GM12878 (cell line): ENCODE measurements at regions of chr2 and their contacts with region 1.

Region 1: GRCh38 chr2:37570773-37571586 is 100.5 kb downstream of the CDC42EP3 start:
- DNase-seq: peak; percentile 98
- ATAC-seq: peak; percentile 87
- H3K4me3 ChIP-seq: peak overlapping the region; percentile 0; the same call in 1 of the 2 replicates
- H3K27ac ChIP-seq: peak overlapping the region; percentile 90
- H3K4me1 ChIP-seq: peaks cover 41% of the 10 kb centered on the region
- H3K27me3 ChIP-seq: no peaks in the 10 kb centered on the region
- CTCF ChIP-seq: no peak
- EP300 ChIP-seq: peak; percentile 86 to 87
- POLR2A ChIP-seq: peak; percentile 59
- RAD21 ChIP-seq: peak; percentile 45

Region 2: DNA sequence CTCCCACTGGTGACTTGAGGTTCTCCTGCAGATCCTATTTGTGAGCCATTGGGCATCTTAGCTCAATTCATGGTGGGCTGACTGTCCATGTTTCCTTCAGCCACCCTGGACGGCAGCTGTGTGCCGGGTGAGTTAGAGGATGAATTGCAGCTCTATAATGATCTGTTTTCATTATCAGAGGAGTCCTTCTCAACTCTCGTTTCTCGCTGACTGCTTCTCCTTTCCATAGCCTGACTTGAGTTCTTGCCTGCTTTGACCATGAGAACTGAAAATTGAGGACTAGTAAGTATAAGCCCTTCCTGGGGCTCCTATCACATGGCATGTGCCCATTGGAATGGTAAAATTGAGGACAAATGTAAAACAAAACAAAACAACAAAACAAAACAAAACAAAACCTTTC is 21.4 kb before region 1 on chr2:
- CTCF ChIA-PET with region 1: interaction called, 14 read pairs
- POLR2A ChIA-PET with region 1: interaction called, 74 read pairs
- RAD21 ChIA-PET with region 1: interaction called, 41 read pairs
- SMC1A ChIA-PET with region 1: interaction called, 246 read pairs
- in situ Hi-C with region 1: no loop called
- intact Hi-C with region 1: loop called (anchors 1 kb)
- DNase-seq: no peak
- ATAC-seq: peak; percentile 87
- H3K4me3 ChIP-seq: peak overlapping the region; percentile 4; the same call in 1 of the 2 replicates
- H3K27ac ChIP-seq: peak overlapping the region; percentile 95
- H3K4me1 ChIP-seq: peaks cover 36% of the 10 kb centered on the region
- H3K27me3 ChIP-seq: no peaks in the 10 kb centered on the region
- CTCF ChIP-seq: no peak
- EP300 ChIP-seq: no peak
- POLR2A ChIP-seq: no peak
- RAD21 ChIP-seq: no peak

Region 3: DNA sequence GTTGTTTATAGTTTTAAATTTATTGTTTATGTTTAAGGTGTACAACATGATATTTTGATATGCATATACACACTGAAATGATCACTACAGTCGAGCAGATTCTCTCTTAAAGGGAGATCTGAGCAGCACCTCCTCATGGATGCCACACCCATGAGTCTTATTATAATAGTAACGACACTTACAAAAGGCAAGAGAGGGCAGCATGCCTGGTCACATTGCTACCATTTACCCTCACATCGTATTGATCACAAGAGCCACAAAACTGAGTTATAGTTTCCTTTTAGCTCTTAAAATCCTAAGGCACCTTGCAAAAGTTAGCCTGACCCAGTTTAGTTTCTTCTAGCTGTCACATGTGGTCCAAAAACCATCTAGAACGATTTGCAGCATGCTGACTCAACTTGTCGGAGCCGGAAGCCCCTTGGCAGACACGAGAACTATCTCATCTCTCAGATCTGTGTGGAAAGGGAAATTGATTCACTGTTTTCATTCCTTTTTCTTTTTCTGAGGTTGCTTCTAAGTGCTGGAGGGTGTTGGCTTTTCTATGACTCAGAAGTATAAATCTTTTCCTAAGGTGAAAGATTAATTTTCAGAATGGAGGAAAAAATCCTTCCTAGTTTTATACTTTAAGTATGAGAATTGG is 15.1 kb after region 1 on chr2:
- CTCF ChIA-PET with region 1: interaction called, 36 read pairs
- POLR2A ChIA-PET with region 1: interaction called, 20 read pairs
- RAD21 ChIA-PET with region 1: interaction called, 10 read pairs
- SMC1A ChIA-PET with region 1: interaction called, 67 read pairs
- in situ Hi-C with region 1: no loop called
- intact Hi-C with region 1: no loop called
- DNase-seq: peak; percentile 68
- ATAC-seq: peak; percentile 58
- H3K4me3 ChIP-seq: no peak overlapping the region
- H3K27ac ChIP-seq: peak overlapping the region; percentile 61
- H3K4me1 ChIP-seq: peaks cover 42% of the 10 kb centered on the region
- H3K27me3 ChIP-seq: no peaks in the 10 kb centered on the region
- CTCF ChIP-seq: no peak
- EP300 ChIP-seq: no peak
- POLR2A ChIP-seq: no peak
- RAD21 ChIP-seq: no peak

Region 4: DNA sequence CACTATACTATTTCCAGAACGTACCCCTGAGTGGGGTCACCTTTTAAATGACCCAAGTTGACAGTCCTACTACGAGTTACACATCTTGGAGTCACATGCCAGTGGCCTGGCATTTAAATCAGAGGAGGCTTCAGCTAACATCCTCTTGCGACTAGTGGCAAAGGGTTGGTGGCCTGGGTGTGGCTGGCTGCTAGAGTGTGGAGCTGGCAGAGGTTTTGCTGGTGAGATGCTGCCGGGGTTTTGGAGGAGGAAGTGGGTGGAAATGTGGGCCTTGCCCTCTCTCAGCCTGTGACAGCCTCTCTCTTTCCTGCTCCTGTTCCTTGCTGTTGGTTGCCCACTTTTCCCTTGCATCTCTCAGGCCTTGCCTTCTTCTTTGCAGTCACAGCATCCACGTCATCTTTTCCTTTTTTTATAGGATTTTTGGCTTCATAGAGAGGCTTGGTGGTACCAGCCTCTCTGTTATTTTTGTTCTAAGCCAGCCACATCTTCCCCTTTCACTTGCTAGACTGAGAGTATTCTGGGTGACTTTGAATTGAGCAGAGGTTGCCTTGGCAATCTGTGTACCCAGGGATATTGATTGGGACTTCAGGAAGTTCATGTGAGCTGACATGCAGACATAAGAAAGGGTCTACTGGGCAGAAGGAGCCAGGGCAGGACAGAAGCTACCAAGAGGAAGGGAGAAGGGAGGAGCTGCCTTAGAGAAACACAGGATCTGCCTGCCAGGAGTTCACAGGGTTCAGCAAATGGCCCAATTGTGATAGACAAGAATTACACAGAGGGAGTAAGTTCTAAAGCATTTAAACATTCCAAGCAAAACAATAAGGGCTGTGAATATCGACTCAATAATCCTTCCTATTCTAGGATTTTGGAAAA is 45.1 kb after region 1 on chr2:
- CTCF ChIA-PET with region 1: interaction called, 22 read pairs
- POLR2A ChIA-PET with region 1: interaction called, 84 read pairs
- RAD21 ChIA-PET with region 1: interaction called, 123 read pairs
- SMC1A ChIA-PET with region 1: interaction called, 62 read pairs
- in situ Hi-C with region 1: no loop called
- intact Hi-C with region 1: no loop called
- DNase-seq: no peak
- ATAC-seq: peak; percentile 58
- H3K4me3 ChIP-seq: no peak overlapping the region
- H3K27ac ChIP-seq: peak overlapping the region; percentile 72
- H3K4me1 ChIP-seq: peaks cover 17% of the 10 kb centered on the region
- H3K27me3 ChIP-seq: no peaks in the 10 kb centered on the region
- CTCF ChIP-seq: no peak
- EP300 ChIP-seq: no peak
- POLR2A ChIP-seq: no peak
- RAD21 ChIP-seq: no peak

Region 5: GRCh38 chr2:37653805-37654378 is 82.9 kb after region 1 on chr2:
- CTCF ChIA-PET with region 1: interaction called, 5 read pairs
- POLR2A ChIA-PET with region 1: interaction called, 11 read pairs
- RAD21 ChIA-PET with region 1: interaction called, 19 read pairs
- SMC1A ChIA-PET with region 1: interaction called, 24 read pairs
- in situ Hi-C with region 1: no loop called
- intact Hi-C with region 1: loop called (anchors 1 kb)
- DNase-seq: peak; percentile 84
- ATAC-seq: peak; percentile 78
- H3K4me3 ChIP-seq: peak overlapping the region; percentile 75
- H3K27ac ChIP-seq: peak overlapping the region; percentile 99
- H3K4me1 ChIP-seq: peaks cover 69% of the 10 kb centered on the region
- H3K27me3 ChIP-seq: no peaks in the 10 kb centered on the region
- CTCF ChIP-seq: no peak
- EP300 ChIP-seq: peak; percentile 91 to 94
- POLR2A ChIP-seq: peak; percentile 93
- RAD21 ChIP-seq: peak; percentile 4; the same call in 1 of the 2 replicates